Ovary (tissue), 10 donors: ENCODE measurements at regions of chr16 and their contacts with region 1.

Region 1: DNA sequence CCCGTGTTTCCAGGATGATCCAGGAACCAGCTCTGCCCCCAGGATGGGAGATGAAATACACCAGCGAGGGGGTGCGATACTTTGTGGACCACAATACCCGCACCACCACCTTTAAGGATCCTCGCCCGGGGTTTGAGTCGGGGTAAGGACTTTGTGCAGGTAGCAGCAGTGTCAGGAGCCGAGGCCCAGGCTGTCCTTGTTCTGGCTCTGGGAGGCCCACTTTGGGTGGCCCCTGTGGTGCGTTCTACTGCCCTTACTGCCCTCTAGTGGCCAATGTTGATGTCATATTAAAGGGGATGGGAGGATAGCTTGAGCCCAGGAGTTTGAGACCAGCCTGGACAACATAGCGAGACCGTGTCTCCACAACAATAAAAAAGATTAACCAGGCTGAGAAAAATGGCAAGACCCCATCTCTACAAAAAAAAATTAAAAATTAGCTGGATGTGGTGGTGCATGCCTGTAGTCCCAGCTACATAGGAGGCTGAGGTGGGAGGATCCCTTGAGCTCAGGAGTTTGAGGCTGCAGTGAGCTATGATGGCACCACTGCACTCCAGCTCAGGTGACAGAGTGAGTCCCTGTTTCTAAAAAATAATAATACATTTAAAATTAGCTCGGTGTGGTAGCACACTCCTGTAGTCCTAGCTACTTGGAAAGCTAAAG is 20.9 kb upstream of the CLEC18A start:
- DNase-seq: peak; percentile 60 to 70 (median 62)
- H3K4me3 ChIP-seq: no peak overlapping the region
- H3K27ac ChIP-seq: no peak overlapping the region
- H3K4me1 ChIP-seq: peaks cover 10% of the 10 kb centered on the region
- H3K27me3 ChIP-seq: no peaks in the 10 kb centered on the region
- CTCF ChIP-seq: peak in 2 of 3 donors; percentile 71 to 72
- EP300 ChIP-seq: no peak
- POLR2A ChIP-seq: no peak

Region 2: DNA sequence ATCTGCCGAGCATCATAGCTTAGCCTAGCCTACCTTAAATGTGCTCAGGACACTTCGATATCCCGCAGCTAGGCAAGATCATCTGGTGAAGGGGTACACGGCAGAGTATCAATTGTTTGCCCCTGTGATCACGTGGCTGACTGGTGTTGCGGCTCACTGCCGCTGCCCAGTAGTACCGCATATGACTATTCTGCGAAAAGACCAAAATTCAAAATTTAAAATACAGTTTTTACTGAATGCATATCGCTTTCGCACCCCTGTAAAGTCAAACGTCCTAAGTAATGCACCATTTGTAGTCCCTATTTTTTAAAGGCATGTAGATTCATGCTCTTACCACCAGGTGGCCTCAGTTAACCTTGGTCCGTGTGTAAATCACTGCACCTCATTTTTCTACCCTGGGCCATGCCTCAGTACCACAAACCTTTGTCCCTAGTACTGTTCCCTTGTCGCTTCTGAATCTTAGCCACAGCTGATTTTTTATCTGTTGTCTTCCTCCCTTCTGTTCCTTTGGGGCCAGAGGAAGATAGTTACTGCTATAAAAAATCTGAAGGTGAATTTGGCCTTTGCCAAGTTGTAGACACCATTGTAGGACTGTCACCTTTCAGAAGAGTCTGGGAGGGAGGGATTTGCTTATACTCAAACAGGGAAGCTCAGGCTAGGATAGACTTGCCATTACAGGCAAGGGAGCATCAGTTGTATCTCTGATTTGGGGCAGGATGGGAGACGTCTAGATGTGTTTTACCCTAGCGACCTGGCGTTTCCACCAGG is 133.7 kb before region 1 on chr16:
- intact Hi-C with region 1: loop called (anchors 2 to 5 kb)
- DNase-seq: peak in 2 of 5 donors; percentile 21 to 43
- H3K4me3 ChIP-seq: no peak overlapping the region
- H3K27ac ChIP-seq: no peak overlapping the region
- H3K4me1 ChIP-seq: peaks cover 1% of the 10 kb centered on the region
- H3K27me3 ChIP-seq: no peaks in the 10 kb centered on the region
- CTCF ChIP-seq: peak; percentile 67 to 94 (median 88)
- EP300 ChIP-seq: no peak
- POLR2A ChIP-seq: no peak

Region 3: GRCh38 chr16:69894676-69895075 is 35.6 kb before region 1 on chr16:
- intact Hi-C with region 1: no loop called
- DNase-seq: no peak
- H3K4me3 ChIP-seq: no peak overlapping the region
- H3K27ac ChIP-seq: no peak overlapping the region
- H3K4me1 ChIP-seq: peaks cover 5% of the 10 kb centered on the region
- H3K27me3 ChIP-seq: no peaks in the 10 kb centered on the region
- CTCF ChIP-seq: no peak
- EP300 ChIP-seq: no peak
- POLR2A ChIP-seq: no peak

Region 4: DNA sequence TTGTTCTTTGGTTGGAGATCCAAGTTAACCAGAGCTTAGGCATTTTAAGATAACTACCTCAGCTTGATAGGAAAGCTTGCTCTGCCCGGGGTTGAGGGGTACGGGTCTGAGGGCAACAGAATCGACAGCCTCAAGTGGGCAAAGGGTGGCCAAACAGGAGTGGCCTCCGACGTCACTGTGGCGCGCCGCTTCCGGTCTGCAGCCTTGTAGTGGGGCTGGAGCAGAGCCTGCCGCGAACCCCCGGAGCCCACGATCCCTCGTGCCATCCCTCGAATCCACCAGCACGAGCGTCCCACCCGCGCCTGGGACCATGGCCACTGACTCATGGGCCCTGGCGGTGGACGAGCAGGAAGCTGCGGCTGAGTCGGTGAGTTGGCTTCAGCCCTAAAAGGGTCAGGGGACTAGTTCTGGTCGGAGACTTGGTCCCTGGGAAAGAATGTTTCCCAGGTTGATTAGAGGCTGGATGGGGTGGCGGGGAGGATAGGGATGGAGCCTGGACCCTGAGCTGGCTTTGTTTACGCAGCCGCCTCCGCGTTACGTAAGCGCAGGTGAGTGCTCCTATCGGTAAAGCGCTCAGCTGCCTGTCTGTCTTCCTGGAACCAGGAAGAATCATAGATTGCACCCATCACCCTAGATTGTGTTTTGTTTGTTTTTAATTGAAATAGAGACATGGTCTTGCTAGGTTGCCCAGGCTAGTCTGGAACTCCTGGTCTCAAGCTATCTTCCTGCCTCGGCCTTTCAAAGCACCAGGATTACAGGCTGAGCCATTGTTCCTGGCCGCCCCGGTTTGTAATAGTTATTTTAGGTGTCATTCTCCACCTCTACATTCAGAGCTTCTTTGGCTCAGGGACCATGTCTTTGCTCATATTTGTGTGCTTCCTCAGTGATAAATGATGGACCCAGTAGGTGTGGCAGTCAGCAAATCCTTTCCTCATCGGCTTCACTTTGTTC is 369.0 kb after region 1 on chr16 and contains the start of gene DDX19B:
- intact Hi-C with region 1: no loop called
- DNase-seq: peak; percentile 73 to 88 (median 80)
- H3K4me3 ChIP-seq: peak within 1 kb of the TSS; percentile 72
- H3K27ac ChIP-seq: peak within 1 kb of the TSS; percentile 56 to 95
- H3K4me1 ChIP-seq: no peaks in the 10 kb centered on the region
- H3K27me3 ChIP-seq: no peaks in the 10 kb centered on the region
- CTCF ChIP-seq: peak in 1 of 3 donors; percentile 26
- EP300 ChIP-seq: no peak
- POLR2A ChIP-seq: peak; percentile 63
- total RNA-seq, gene DDX19B: 18.9 to 42.2 (median 21.6) TPM

Region 5: DNA sequence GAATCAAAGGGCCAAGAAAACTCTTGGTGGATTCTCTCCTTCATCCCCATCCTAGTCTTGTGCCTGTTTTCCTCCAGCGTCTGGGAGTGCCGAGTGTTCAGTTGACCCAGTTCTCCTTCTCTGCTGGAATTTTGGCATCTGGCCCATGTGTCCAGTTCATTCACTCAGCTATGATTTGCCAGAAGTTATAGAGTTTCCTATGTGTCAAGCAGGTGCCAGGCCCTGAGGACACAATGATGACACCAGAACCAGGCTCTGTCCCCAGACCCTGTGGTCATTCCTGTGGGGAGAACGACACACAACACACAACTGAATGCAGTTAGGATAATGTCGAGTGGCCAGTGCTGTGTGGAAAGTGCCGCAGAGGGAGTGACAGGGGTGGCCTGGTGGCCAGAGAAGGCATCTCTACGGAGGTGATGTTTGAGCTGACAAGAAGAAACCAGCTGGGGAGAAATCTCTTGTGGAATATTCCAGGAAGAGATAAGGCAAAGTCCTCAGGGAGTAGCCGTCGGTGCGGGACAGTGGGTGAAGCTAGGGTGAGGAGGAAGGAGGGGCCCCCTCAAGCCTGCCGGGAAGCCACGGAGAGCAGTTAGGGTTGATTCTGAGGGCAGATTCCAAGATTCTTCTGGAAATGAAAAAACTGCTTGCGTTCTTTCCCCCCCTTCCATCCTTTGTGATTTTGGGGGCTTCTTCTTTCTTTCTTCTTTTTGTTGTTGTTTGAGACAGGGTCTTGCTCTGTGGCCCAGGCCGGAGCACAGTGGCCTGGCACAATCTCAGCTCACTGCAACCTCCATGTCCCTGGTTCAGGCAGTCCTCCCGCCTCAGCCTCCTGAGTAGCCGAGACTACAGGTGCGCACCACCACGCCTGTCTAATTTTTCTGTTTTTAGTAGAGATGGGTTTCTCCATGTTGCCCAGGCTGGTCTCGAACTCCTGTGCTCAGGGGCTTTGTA is 680.3 kb after region 1 on chr16:
- intact Hi-C with region 1: no loop called
- DNase-seq: no peak
- H3K4me3 ChIP-seq: no peak overlapping the region
- H3K27ac ChIP-seq: no peak overlapping the region
- H3K4me1 ChIP-seq: peaks cover 3% of the 10 kb centered on the region
- H3K27me3 ChIP-seq: no peaks in the 10 kb centered on the region
- CTCF ChIP-seq: no peak
- EP300 ChIP-seq: no peak
- POLR2A ChIP-seq: no peak